CD8-positive, alpha-beta T cell (primary cell): ENCODE measurements at regions of chr18 and their contacts with region 1.

Region 1: DNA sequence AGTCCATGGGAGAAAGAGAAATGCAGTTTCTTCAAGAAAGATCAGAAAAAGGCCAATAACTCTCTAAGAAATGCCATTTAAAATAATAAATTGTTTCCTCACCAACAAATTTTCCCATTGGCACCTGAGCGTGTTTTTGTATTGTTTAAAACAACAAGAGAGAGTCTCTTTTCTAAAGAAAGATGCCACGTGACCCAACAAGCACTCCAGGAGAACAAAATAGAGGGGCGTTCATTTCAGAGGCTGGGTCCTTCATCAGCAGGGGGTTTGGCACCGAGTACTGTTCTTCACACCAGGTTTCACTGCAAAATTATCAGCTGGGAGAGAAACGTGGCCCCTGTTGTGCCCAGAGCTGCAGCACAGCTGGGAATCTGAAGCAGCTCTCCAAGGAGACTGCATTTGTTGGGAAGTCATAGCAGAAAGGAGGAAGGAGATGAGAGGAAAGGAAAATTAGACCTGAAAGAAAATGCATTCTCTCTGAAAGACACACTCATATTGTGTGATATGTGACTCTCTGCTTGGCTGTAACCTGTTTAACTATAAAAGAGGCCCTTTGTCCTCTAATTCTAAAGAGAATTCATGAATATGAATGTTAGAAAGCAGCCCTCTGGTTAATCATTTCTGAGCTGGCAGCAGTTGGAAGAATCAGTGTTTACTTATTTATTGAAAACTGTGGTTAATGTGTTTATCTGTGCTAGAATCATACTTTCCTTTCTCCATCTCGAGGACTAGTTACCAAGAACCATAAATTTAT is 205.3 kb upstream of the CDH20 start:
- DNase-seq: no peak
- ATAC-seq: no peak
- H3K4me3 ChIP-seq: no peak overlapping the region
- H3K4me3 Mint-ChIP-seq: no peak overlapping the region
- H3K27ac ChIP-seq: no peak overlapping the region
- H3K27ac Mint-ChIP-seq: no peak overlapping the region
- H3K4me1 ChIP-seq: no peaks in the 10 kb centered on the region
- H3K4me1 Mint-ChIP-seq: no peaks in the 10 kb centered on the region
- H3K27me3 ChIP-seq: no peaks in the 10 kb centered on the region
- H3K27me3 Mint-ChIP-seq: no peaks in the 10 kb centered on the region
- CTCF ChIP-seq: no peak

Region 2: DNA sequence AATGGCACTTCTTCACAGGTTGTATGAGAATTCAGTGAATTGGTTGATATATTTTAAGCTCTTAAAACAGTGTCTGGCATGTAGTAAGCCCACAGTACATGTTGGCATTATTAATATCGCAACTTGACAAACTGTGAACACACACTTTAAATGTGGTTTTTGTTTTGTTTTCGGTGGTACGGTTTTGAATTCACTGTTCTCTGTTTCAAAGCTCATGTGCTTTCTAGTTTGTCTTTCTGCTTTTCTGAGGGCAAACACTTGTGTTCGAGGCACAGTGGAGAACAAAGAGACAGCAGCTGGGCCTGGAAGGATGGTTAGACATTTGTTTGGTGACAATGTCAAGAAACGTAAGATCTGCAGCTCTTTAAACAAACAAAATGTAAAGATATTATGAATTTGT is 478.8 kb before region 1 on chr18:
- CTCF ChIA-PET with region 1: no interaction called
- POLR2A ChIA-PET with region 1: no interaction called
- intact Hi-C with region 1: loop called in 1 of 2 experiments (anchors 10 kb)
- DNase-seq: no peak
- ATAC-seq: no peak
- H3K4me3 ChIP-seq: no peak overlapping the region
- H3K4me3 Mint-ChIP-seq: no peak overlapping the region
- H3K27ac ChIP-seq: no peak overlapping the region
- H3K27ac Mint-ChIP-seq: no peak overlapping the region
- H3K4me1 ChIP-seq: no peaks in the 10 kb centered on the region
- H3K4me1 Mint-ChIP-seq: no peaks in the 10 kb centered on the region
- H3K27me3 ChIP-seq: no peaks in the 10 kb centered on the region
- H3K27me3 Mint-ChIP-seq: no peaks in the 10 kb centered on the region
- CTCF ChIP-seq: no peak